ENCODE measurements at regions of chr4 and their contacts with region 1.

Region 1: GRCh38 chr4:7802093-7802726 is 137.5 kb downstream of the AFAP1 start:
- DNase-seq: peak; percentile 80 to 93 (median 90)
- ATAC-seq: peak; percentile 49 to 58
- H3K4me3 ChIP-seq: no peak overlapping the region
- H3K27ac ChIP-seq: no peak overlapping the region
- H3K4me1 ChIP-seq: peaks cover 10% of the 10 kb centered on the region
- H3K27me3 ChIP-seq: no peaks in the 10 kb centered on the region

Region 2: GRCh38 chr4:7761720-7762119 is 40.5 kb before region 1 on chr4:
- intact Hi-C with region 1: loop called in 3 of 4 experiments (anchors 5 kb)
- DNase-seq: peak; percentile 82 to 95 (median 86)
- ATAC-seq: peak; percentile 86 to 89
- H3K4me3 ChIP-seq: no peak overlapping the region
- H3K27ac ChIP-seq: no peak overlapping the region
- H3K4me1 ChIP-seq: peaks cover 7% of the 10 kb centered on the region
- H3K27me3 ChIP-seq: no peaks in the 10 kb centered on the region

Region 3: DNA sequence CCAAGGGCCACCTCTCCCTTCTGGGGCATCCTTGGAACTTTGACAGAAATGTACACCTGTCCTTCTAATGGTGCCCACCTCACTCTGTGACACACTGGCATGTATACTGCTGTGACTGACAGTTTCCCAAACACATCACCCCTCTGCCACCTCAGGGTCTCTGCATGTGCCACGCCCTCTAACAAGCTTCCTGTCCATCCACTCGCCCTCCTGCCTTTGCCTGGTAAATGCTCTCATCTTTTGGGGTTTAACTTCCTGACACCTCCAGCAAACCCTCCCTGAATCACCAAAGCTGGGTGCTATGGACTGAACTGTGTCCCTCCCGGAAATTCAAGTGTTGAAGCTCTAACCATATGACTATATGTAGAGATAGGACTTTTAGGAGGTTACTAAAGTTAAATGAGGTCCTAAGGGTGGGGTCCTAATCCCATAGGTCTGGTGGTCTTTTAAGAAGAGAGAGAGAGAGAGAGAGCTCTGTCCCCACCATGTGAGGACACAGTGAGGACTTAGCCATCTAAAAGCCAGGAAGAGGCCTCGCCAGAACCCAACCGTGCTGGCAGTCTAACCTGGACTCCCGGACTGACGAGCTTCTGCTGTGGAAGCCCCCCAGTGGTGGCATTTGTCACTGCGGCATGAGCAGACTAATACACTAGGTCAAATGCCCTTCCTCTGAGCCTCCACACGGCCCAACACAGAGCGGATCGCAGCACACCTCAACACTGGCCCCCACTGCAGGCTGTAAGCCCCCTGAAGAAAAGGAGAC is 41.8 kb after region 1 on chr4:
- intact Hi-C with region 1: loop called in 2 of 4 experiments (anchors 5 kb)
- DNase-seq: peak; percentile 87 to 94 (median 91)
- ATAC-seq: peak; percentile 66 to 72
- H3K4me3 ChIP-seq: no peak overlapping the region
- H3K27ac ChIP-seq: peak overlapping the region; percentile 55
- H3K4me1 ChIP-seq: peaks cover 9% of the 10 kb centered on the region
- H3K27me3 ChIP-seq: no peaks in the 10 kb centered on the region

Region 4: DNA sequence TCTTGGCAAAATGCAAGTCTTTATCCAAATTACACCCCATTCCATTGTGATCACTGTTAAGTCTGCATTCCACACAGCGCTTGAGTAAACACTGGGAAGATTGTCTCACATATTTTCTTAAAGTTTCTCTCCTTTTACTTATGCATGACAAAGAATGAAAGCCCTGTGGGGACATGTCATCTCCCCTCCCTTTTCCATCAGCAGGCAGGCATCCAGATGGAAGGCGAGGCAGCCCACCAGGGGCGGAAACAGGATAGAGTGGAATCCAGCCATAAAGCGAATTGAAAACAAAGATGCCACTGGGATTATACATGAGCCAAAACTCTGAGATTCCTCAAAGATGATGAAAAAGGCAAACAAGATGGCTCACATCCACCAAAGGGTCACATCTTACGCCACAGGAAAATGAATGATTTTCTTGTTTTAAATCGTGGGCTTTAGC is 59.3 kb after region 1 on chr4:
- intact Hi-C with region 1: loop called in 1 of 4 experiments (anchors 10 kb)
- DNase-seq: peak; percentile 50 to 72 (median 72)
- ATAC-seq: peak; percentile 59 to 64
- H3K4me3 ChIP-seq: no peak overlapping the region
- H3K27ac ChIP-seq: no peak overlapping the region
- H3K4me1 ChIP-seq: peaks cover 17% of the 10 kb centered on the region
- H3K27me3 ChIP-seq: no peaks in the 10 kb centered on the region

Region 5: GRCh38 chr4:7939377-7940108 is 137.3 kb after region 1 on chr4 and contains the start of gene AFAP1:
- intact Hi-C with region 1: loop called in 2 of 4 experiments (anchors 10 kb)
- DNase-seq: peak; percentile 92 to 97 (median 96)
- ATAC-seq: peak; percentile 95 to 96
- H3K4me3 ChIP-seq: peak within 1 kb of the TSS; percentile 88
- H3K27ac ChIP-seq: peak within 1 kb of the TSS; percentile 69
- H3K4me1 ChIP-seq: peaks cover 4% of the 10 kb centered on the region
- H3K27me3 ChIP-seq: no peaks in the 10 kb centered on the region
- total RNA-seq, gene AFAP1: 21.9 to 43.6 (median 26.7) TPM

Region 6: GRCh38 chr4:7987148-7987989 is 185.2 kb after region 1 on chr4:
- intact Hi-C with region 1: loop called (anchors 1 to 5 kb)
- DNase-seq: peak; percentile 71 to 89 (median 80)
- ATAC-seq: peak; percentile 70 to 74
- H3K4me3 ChIP-seq: no peak overlapping the region
- H3K27ac ChIP-seq: no peak overlapping the region
- H3K4me1 ChIP-seq: no peaks in the 10 kb centered on the region
- H3K27me3 ChIP-seq: no peaks in the 10 kb centered on the region